ENCODE measurements at regions of chr2 and their contacts with region 1.

Region 1: DNA sequence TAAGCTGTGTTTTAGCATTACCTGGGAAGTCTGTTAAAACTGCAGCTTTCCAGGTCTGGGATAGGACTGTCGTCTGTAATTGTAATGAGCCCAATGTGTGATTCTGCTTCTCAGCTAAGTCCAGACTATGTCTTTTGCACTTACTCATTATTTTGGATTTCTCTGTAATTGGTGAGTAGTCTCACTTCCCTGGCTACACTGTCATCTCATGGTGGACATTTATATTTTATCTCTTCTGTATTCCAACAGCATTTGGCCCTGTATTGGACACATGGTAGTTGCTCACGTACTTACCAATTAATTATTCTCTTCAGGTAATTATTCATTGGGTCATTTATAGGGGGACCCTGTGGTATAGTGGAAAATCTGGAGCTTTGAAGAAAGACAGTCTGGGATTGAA is 28.0 kb downstream of the LHCGR start:
- DNase-seq: peak; percentile 57
- ATAC-seq: peak; percentile 35
- H3K4me3 ChIP-seq: no peak overlapping the region
- H3K27ac ChIP-seq: no peak overlapping the region
- H3K4me1 ChIP-seq: no peaks in the 10 kb centered on the region
- H3K27me3 ChIP-seq: peaks cover 19% of the 10 kb centered on the region
- CTCF ChIP-seq: peak; percentile 54

Region 2: GRCh38 chr2:48315896-48316194 is 411.7 kb before region 1 on chr2:
- CTCF ChIA-PET with region 1: no interaction called
- POLR2A ChIA-PET with region 1: no interaction called
- intact Hi-C with region 1: no loop called
- DNase-seq: peak; percentile 28
- ATAC-seq: no peak
- H3K4me3 ChIP-seq: peak overlapping the region; percentile 79
- H3K27ac ChIP-seq: peak overlapping the region; percentile 58
- H3K4me1 ChIP-seq: peaks cover 29% of the 10 kb centered on the region
- H3K27me3 ChIP-seq: no peaks in the 10 kb centered on the region
- CTCF ChIP-seq: no peak

Region 3: GRCh38 chr2:48600204-48600813 is 127.3 kb before region 1 on chr2:
- CTCF ChIA-PET with region 1: no interaction called
- POLR2A ChIA-PET with region 1: no interaction called
- intact Hi-C with region 1: loop called (anchors 1 kb)
- DNase-seq: peak; percentile 84
- ATAC-seq: peak; percentile 63
- H3K4me3 ChIP-seq: no peak overlapping the region
- H3K27ac ChIP-seq: no peak overlapping the region
- H3K4me1 ChIP-seq: peaks cover 8% of the 10 kb centered on the region
- H3K27me3 ChIP-seq: no peaks in the 10 kb centered on the region
- CTCF ChIP-seq: peak; percentile 81